Left cardiac atrium (tissue), 4 donors: ENCODE measurements at regions of chr1 and their contacts with region 1.

Region 1: DNA sequence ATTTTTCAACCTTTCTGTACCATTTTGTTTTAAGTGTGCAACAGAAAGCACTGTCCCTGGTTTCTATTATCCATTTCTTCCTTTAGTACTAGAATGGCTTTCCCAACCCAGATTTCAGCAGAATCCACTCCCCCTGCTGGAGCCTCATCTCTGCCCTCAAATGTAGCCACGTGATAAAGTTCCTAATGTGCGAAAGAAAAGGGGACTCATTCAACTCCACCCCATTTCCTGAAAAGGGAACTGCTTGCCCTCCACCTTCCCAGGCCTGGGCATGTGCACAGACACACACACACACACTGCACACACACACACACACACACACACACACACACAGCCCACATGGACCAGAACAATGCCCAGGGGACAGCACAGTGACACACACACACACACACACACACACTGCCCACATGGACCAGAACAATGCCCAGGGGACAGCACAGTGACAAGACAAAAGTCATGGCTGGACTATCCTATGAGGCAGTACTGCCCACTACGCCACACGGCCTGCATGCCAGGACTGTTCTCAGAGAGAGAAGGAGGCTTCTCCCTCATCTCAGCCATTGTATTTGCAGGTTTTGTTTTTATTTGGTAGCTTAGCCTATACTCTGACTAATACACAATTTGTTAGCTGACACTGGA is 33.2 kb downstream of the PACC1 start:
- DNase-seq: no peak
- ATAC-seq: no peak

Region 2: GRCh38 chr1:212053993-212054392 is 327.5 kb before region 1 on chr1:
- intact Hi-C with region 1: loop called in 1 of 2 experiments (anchors 10 kb)
- DNase-seq: no peak
- ATAC-seq: no peak